MCF 10A (cell line): ENCODE measurements at regions of chr7 and their contacts with region 1.

Region 1: DNA sequence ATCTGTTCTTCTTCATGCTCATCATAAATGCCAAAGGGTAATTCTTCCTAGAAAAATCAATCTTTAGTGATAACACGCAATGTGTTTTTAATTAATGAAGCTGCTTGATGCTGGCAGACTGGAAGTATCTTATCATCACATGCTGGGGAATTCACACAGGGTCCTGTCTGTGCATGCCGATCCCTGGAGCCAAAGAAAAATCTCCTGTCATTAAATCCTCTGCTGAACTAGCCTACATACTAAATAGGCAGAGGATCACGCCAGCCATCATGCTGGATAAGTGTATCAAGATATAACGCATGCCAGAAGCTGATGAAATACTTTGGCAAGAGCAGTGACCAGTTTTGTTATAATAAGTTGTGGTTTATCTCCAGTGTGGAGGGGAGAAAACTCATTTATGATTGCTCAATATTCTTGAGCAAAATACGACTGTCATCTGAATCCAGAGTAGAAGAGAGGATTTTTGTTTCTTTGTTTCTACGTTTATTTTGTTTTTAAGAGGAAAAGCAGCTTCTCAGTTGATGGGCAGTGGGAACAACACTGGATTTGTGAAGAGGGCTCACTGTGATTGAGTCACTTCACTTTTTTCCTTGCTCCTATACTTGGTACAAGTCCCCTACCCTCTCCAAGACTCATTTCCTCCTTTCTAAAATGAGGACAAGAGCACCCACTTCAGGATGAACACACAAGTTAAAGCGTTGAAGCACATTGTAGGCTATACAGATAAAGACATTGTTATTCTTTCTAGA is 649.1 kb downstream of the TNS3 start:
- DNase-seq: peak; percentile 96
- H3K4me3 Mint-ChIP-seq: peak overlapping the region; percentile 12
- H3K27ac Mint-ChIP-seq: peak overlapping the region; percentile 86
- H3K4me1 Mint-ChIP-seq: peaks cover 46% of the 10 kb centered on the region
- H3K27me3 Mint-ChIP-seq: no peaks in the 10 kb centered on the region
- CTCF ChIP-seq: peak; percentile 48

Region 2: GRCh38 chr7:46162609-46163008 is 770.2 kb before region 1 on chr7:
- CTCF ChIA-PET with region 1: interaction called, 3 read pairs
- POLR2A ChIA-PET with region 1: no interaction called
- intact Hi-C with region 1: loop called (anchors 10 kb)
- DNase-seq: peak; percentile 41
- H3K4me3 Mint-ChIP-seq: no peak overlapping the region
- H3K27ac Mint-ChIP-seq: no peak overlapping the region
- H3K4me1 Mint-ChIP-seq: peaks cover 37% of the 10 kb centered on the region
- H3K27me3 Mint-ChIP-seq: no peaks in the 10 kb centered on the region
- CTCF ChIP-seq: no peak

Region 3: GRCh38 chr7:46695051-46695707 is 237.7 kb before region 1 on chr7:
- CTCF ChIA-PET with region 1: no interaction called
- POLR2A ChIA-PET with region 1: no interaction called
- intact Hi-C with region 1: loop called (anchors 5 kb)
- DNase-seq: no peak
- H3K4me3 Mint-ChIP-seq: no peak overlapping the region
- H3K27ac Mint-ChIP-seq: no peak overlapping the region
- H3K4me1 Mint-ChIP-seq: no peaks in the 10 kb centered on the region
- H3K27me3 Mint-ChIP-seq: no peaks in the 10 kb centered on the region
- CTCF ChIP-seq: no peak

Region 4: DNA sequence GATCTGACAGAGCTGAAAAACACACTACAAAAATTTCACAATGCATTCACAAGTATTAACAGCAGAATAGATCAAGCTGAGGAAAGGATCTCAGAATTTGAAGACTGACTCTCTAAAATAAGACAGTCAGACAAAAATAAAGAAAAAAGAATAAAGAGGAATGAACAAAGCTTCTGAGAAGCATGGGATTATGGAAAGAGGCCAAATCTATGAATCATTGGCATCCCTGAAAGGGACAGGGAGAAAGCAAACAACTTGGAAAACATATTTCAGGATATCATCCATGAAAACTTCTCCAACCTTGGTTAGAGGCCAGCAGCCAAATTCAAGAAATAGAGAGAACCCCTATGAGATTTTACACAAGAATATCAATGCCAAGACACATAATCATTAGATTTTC is 207.0 kb before region 1 on chr7:
- CTCF ChIA-PET with region 1: no interaction called
- POLR2A ChIA-PET with region 1: no interaction called
- intact Hi-C with region 1: no loop called
- DNase-seq: peak; percentile 63
- H3K4me3 Mint-ChIP-seq: no peak overlapping the region
- H3K27ac Mint-ChIP-seq: peak overlapping the region; percentile 73
- H3K4me1 Mint-ChIP-seq: peaks cover 15% of the 10 kb centered on the region
- H3K27me3 Mint-ChIP-seq: no peaks in the 10 kb centered on the region
- CTCF ChIP-seq: no peak

Region 5: DNA sequence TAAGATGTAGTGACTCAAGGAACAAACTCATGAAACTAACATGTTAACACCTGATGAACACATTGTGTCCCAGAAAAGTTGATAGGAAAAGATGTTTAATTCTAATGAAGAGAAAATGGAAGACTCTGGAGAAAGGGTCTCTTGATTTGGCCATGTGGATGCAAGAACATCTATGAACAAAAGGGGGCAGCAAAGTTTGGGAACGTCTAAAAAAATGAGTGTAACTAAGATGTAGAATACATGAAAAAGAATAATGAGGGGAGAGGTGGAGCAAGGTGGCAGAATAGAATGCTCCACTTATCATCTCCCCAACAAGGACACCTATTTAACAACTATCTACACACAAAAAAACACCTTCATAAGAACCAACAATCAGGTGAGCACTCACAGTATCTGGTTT is 156.1 kb before region 1 on chr7:
- CTCF ChIA-PET with region 1: interaction called, 4 read pairs
- POLR2A ChIA-PET with region 1: interaction called, 3 read pairs
- intact Hi-C with region 1: loop called (anchors 2 kb)
- DNase-seq: peak; percentile 47
- H3K4me3 Mint-ChIP-seq: no peak overlapping the region
- H3K27ac Mint-ChIP-seq: no peak overlapping the region
- H3K4me1 Mint-ChIP-seq: peaks cover 25% of the 10 kb centered on the region
- H3K27me3 Mint-ChIP-seq: no peaks in the 10 kb centered on the region
- CTCF ChIP-seq: peak; percentile 12

Region 6: GRCh38 chr7:46945328-46945727 is 12.5 kb after region 1 on chr7:
- CTCF ChIA-PET with region 1: interaction called, 3 read pairs
- POLR2A ChIA-PET with region 1: interaction called, 14 read pairs
- intact Hi-C with region 1: no loop called
- DNase-seq: no peak
- H3K4me3 Mint-ChIP-seq: no peak overlapping the region
- H3K27ac Mint-ChIP-seq: no peak overlapping the region
- H3K4me1 Mint-ChIP-seq: no peaks in the 10 kb centered on the region
- H3K27me3 Mint-ChIP-seq: no peaks in the 10 kb centered on the region
- CTCF ChIP-seq: no peak

Region 7: DNA sequence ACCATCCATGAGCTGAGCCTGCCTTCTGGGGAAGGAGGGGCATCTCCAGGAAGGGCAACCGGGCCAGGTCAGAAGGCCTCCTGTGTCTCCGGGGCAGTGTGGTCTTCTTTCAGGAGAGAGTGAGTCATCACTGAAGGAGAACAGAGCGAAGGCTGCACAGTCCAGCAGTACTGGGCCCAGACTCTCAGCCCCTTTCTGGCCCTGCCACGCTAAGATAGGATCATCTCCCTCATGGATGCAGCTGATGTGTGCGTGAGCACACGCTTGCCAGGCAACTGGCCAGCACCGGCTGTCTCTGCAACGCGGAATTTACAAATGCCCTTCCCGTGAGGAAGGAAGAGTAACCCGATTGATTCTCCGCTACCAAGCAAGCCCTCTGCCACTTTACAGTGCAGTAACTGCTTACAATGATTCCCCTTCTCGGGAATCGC is 320.8 kb after region 1 on chr7:
- CTCF ChIA-PET with region 1: no interaction called
- POLR2A ChIA-PET with region 1: no interaction called
- intact Hi-C with region 1: no loop called
- DNase-seq: peak; percentile 65
- H3K4me3 Mint-ChIP-seq: peak overlapping the region; percentile 67
- H3K27ac Mint-ChIP-seq: peak overlapping the region; percentile 14
- H3K4me1 Mint-ChIP-seq: peaks cover 2% of the 10 kb centered on the region
- H3K27me3 Mint-ChIP-seq: no peaks in the 10 kb centered on the region
- CTCF ChIP-seq: no peak